T-cell (primary cell): ENCODE measurements at regions of chr7 and their contacts with region 1.

Region 1: DNA sequence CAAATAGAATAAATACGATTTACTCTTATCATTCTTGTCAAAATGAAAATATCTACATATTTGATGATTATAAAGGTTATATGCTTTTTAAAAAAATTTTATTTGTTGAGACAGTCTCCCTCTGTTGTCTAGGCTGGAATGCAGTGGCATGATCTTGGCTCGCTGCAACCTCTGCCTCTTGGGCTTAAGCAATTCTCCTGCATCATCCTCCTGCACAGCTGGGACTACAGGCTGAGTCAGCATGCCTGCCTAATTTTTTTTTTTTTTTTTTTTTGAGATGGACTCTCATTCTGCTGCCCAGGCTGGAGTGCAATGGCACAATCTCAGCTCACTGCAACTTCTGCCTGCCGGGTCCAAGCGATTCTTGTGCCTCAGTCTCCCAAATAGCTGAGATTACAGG is 48.9 kb downstream of the PUS7 start:
- DNase-seq: no peak
- ATAC-seq: no peak
- H3K4me3 ChIP-seq: no peak overlapping the region
- H3K4me3 Mint-ChIP-seq: no peak overlapping the region
- H3K27ac ChIP-seq: no peak overlapping the region
- H3K27ac Mint-ChIP-seq: no peak overlapping the region
- H3K4me1 ChIP-seq: no peaks in the 10 kb centered on the region
- H3K4me1 Mint-ChIP-seq: no peaks in the 10 kb centered on the region
- H3K27me3 ChIP-seq: no peaks in the 10 kb centered on the region
- H3K27me3 Mint-ChIP-seq: no peaks in the 10 kb centered on the region

Region 2: DNA sequence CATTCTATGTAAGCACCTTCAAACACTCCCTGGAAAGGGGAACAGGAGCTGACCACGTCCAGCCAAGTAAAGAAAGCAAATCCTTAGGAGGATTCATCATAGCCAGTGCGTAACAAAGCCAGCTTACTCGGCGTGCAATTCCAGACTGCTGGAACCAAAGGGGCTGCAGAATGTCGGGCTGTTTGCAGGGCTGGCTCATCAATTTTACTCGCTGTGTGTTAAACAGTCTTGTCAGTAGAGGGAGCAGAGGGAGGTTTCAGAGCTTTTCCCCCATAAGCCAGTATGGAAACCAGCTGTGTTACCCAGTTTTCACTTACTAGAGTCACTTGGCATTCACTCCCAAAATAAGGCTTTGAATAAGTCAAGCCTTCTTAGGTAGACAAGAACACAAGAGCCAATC is 332.1 kb before region 1 on chr7:
- CTCF ChIA-PET with region 1: no interaction called
- POLR2A ChIA-PET with region 1: interaction called in 1 of 2 experiments, 10 read pairs
- DNase-seq: peak in 1 of 35 experiments; percentile 27
- ATAC-seq: no peak
- H3K4me3 ChIP-seq: no peak overlapping the region
- H3K4me3 Mint-ChIP-seq: no peak overlapping the region
- H3K27ac ChIP-seq: no peak overlapping the region
- H3K27ac Mint-ChIP-seq: no peak overlapping the region
- H3K4me1 ChIP-seq: no peaks in the 10 kb centered on the region
- H3K4me1 Mint-ChIP-seq: peaks cover 6 to 14% (median 11%) of the 10 kb centered on the region in 3 donors
- H3K27me3 ChIP-seq: no peaks in the 10 kb centered on the region
- H3K27me3 Mint-ChIP-seq: no peaks in the 10 kb centered on the region

Region 3: GRCh38 chr7:105439174-105439893 is 33.8 kb before region 1 on chr7:
- CTCF ChIA-PET with region 1: interaction called in 1 of 2 experiments, 10 read pairs
- POLR2A ChIA-PET with region 1: no interaction called
- DNase-seq: no peak
- ATAC-seq: no peak
- H3K4me3 ChIP-seq: no peak overlapping the region
- H3K4me3 Mint-ChIP-seq: no peak overlapping the region
- H3K27ac ChIP-seq: no peak overlapping the region
- H3K27ac Mint-ChIP-seq: no peak overlapping the region
- H3K4me1 ChIP-seq: no peaks in the 10 kb centered on the region
- H3K4me1 Mint-ChIP-seq: peaks cover 0 to under 1% (median 0%) of the 10 kb centered on the region in 3 donors
- H3K27me3 ChIP-seq: no peaks in the 10 kb centered on the region
- H3K27me3 Mint-ChIP-seq: no peaks in the 10 kb centered on the region